ENCODE measurements at regions of chr3 and their contacts with region 1.

Region 1: DNA sequence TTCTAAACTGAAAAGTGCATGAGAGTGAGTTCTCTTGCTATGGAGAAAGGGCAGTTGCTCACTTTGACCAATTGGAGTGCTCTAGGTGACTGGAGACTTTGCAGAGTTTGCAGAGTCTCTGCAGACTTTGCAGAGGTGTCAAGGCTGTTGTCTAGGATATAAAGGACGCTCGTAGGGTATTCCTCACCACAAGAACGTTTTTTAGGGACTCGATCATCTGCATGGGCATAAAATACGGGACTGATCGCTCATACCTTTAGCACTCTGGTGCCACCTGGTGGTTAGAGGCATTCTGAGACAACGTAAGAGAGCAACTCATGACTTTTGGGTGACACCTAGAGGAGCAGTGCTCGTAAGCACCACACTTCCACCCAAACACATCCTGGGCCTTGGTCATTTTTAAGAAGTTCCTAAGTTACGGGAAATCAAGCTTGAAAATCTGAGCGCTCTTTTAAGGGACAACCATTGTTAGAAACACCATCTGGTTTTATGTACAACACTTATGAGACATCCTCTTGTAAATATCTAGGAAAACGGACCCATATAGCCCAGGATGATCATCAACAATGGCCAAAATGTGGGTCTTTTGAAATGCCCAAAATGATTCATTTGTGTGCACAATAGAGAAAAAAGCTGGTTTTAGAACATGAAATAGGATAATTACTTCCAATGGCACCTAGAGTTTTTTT is 51.6 kb upstream of the XCR1 start:
- DNase-seq: peak; percentile 97
- ATAC-seq: peak; percentile 99
- H3K4me3 Mint-ChIP-seq: no peak overlapping the region
- H3K27ac Mint-ChIP-seq: no peak overlapping the region
- H3K4me1 Mint-ChIP-seq: peaks cover 10% of the 10 kb centered on the region
- H3K27me3 Mint-ChIP-seq: peaks cover 8% of the 10 kb centered on the region
- CTCF ChIP-seq: peak; percentile 99

Region 2: GRCh38 chr3:45864760-45865519 is 213.9 kb before region 1 on chr3:
- CTCF ChIA-PET with region 1: interaction called, 9 read pairs
- POLR2A ChIA-PET with region 1: no interaction called
- intact Hi-C with region 1: loop called (anchors 10 kb)
- DNase-seq: peak; percentile 61
- ATAC-seq: peak; percentile 85
- H3K4me3 Mint-ChIP-seq: no peak overlapping the region
- H3K27ac Mint-ChIP-seq: peak overlapping the region; percentile 21
- H3K4me1 Mint-ChIP-seq: peaks cover 46% of the 10 kb centered on the region
- H3K27me3 Mint-ChIP-seq: peaks cover 58% of the 10 kb centered on the region
- CTCF ChIP-seq: no peak

Region 3: DNA sequence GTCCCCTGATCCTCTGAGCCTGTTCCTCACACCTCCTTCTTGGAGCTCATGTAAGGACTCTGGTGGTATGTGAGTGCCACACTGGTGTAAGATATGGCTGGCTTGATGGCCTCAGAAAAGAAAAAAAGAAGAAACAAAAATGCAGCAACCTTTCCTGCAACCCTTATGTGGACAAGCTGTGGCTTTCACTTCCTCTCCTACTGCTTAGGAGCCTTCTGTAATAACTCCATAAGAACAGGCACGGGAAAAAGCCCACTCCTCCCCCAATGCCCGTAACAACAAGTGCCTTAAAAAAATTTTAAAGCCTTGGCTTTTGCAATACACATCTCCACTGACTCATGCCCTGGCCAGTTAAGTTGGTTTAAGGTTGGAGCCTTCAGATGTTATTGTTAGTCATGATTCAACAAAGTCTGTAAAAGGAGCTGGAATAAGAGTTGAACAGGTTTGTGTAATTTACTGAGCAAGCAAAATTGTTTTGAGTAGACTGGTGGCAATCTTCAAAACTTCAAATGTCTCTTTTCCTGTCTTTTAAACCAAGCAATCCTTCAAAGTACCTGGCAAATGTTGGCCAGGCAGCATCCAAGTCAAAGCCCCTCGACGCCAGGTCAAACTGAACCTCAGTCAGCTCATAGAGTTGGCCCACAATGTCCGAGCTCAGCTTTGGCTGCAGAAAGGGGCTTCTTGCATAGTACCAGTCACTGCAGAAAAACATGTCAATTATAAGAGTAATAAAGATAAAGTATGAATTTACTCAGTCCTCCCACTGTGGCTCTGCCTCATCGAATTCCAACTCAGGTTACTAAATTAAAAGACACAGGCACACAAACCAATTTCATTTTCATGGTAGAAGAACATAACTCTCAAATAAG is 106.1 kb before region 1 on chr3:
- CTCF ChIA-PET with region 1: interaction called, 136 read pairs
- POLR2A ChIA-PET with region 1: no interaction called
- intact Hi-C with region 1: no loop called
- DNase-seq: peak; percentile 29
- ATAC-seq: peak; percentile 38
- H3K4me3 Mint-ChIP-seq: no peak overlapping the region
- H3K27ac Mint-ChIP-seq: peak overlapping the region; percentile 60
- H3K4me1 Mint-ChIP-seq: peaks cover 60% of the 10 kb centered on the region
- H3K27me3 Mint-ChIP-seq: no peaks in the 10 kb centered on the region
- CTCF ChIP-seq: no peak

Region 4: DNA sequence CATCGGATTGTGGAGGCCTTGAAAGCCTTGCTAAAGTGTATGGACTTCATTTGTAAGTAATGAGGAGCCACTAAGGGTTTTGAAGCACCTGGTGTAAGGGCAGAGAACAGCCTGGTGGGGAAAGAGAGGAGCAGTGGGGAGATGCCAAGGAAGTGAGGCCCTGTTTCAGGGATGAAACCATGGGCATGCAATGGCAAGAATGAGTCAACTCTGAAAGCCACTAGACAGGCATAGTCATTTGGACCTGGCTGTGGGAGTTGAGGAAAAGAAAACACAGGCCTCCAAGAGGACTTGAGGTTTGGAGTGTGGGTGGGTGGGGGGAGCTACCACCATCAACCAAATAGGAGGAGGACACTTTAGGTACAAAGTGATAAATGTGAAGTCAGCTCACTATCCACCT is 59.1 kb before region 1 on chr3:
- CTCF ChIA-PET with region 1: interaction called, 13 read pairs
- POLR2A ChIA-PET with region 1: no interaction called
- intact Hi-C with region 1: no loop called
- DNase-seq: peak; percentile 58
- ATAC-seq: peak; percentile 42
- H3K4me3 Mint-ChIP-seq: no peak overlapping the region
- H3K27ac Mint-ChIP-seq: peak overlapping the region; percentile 13
- H3K4me1 Mint-ChIP-seq: peaks cover 30% of the 10 kb centered on the region
- H3K27me3 Mint-ChIP-seq: peaks cover 6% of the 10 kb centered on the region
- CTCF ChIP-seq: no peak

Region 5: GRCh38 chr3:46098319-46098761 is 19.5 kb after region 1 on chr3:
- CTCF ChIA-PET with region 1: interaction called, 37 read pairs
- POLR2A ChIA-PET with region 1: interaction called, 3 read pairs
- intact Hi-C with region 1: no loop called
- DNase-seq: peak; percentile 76
- ATAC-seq: peak; percentile 54
- H3K4me3 Mint-ChIP-seq: peak overlapping the region; percentile 10
- H3K27ac Mint-ChIP-seq: peak overlapping the region; percentile 87
- H3K4me1 Mint-ChIP-seq: peaks cover 41% of the 10 kb centered on the region
- H3K27me3 Mint-ChIP-seq: peaks cover 25% of the 10 kb centered on the region
- CTCF ChIP-seq: no peak

Region 6: GRCh38 chr3:46378426-46378942 is 299.6 kb after region 1 on chr3:
- CTCF ChIA-PET with region 1: interaction called, 35 read pairs
- POLR2A ChIA-PET with region 1: no interaction called
- intact Hi-C with region 1: no loop called
- DNase-seq: peak; percentile 81
- ATAC-seq: peak; percentile 42
- H3K4me3 Mint-ChIP-seq: no peak overlapping the region
- H3K27ac Mint-ChIP-seq: no peak overlapping the region
- H3K4me1 Mint-ChIP-seq: peaks cover 33% of the 10 kb centered on the region
- H3K27me3 Mint-ChIP-seq: peaks cover 6% of the 10 kb centered on the region
- CTCF ChIP-seq: peak; percentile 90